ENCODE measurements at regions of chr9 and their contacts with region 1.

Region 1: GRCh38 chr9:94681508-94681907 is 42.2 kb upstream of the FBP1 start:
- DNase-seq: peak; percentile 68
- ATAC-seq: peak; percentile 97
- H3K4me3 Mint-ChIP-seq: no peak overlapping the region
- H3K27ac Mint-ChIP-seq: no peak overlapping the region
- H3K4me1 Mint-ChIP-seq: peaks cover 11% of the 10 kb centered on the region
- H3K27me3 Mint-ChIP-seq: peaks cover 5% of the 10 kb centered on the region; the same call in 1 of the 2 replicates
- CTCF ChIP-seq: 0 out of 2 replicates have a peak, but pooled peaks have one; percentile 36

Region 2: GRCh38 chr9:93843396-93843795 is 838.1 kb before region 1 on chr9:
- CTCF ChIA-PET with region 1: no interaction called
- POLR2A ChIA-PET with region 1: no interaction called
- DNase-seq: no peak
- ATAC-seq: no peak
- H3K4me3 Mint-ChIP-seq: no peak overlapping the region
- H3K27ac Mint-ChIP-seq: no peak overlapping the region
- H3K4me1 Mint-ChIP-seq: no peaks in the 10 kb centered on the region
- H3K27me3 Mint-ChIP-seq: peaks cover 6% of the 10 kb centered on the region
- CTCF ChIP-seq: no peak

Region 3: DNA sequence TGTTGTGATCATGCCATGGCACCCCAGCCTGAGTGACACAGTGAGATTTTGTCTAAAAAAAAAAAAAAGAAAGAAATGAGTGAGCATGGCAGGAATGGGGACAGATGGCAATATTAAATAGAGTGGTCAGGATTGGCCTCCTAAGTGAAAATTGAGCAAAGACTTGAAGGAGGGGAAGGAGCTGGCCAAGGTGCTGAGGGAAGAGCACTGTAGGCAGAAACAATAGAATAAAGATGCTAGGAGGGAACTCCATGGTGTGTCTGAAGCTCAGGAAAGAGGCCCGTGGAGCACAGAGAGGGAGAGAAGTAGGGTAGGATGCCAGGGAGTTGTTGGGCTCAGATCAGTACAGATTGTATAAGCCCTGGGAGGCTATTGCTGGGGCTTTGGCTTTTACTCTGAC is 191.0 kb before region 1 on chr9:
- CTCF ChIA-PET with region 1: no interaction called
- POLR2A ChIA-PET with region 1: no interaction called
- DNase-seq: no peak
- ATAC-seq: no peak
- H3K4me3 Mint-ChIP-seq: no peak overlapping the region
- H3K27ac Mint-ChIP-seq: no peak overlapping the region
- H3K4me1 Mint-ChIP-seq: no peaks in the 10 kb centered on the region
- H3K27me3 Mint-ChIP-seq: no peaks in the 10 kb centered on the region; the same call in 1 of the 2 replicates
- CTCF ChIP-seq: no peak

Region 4: GRCh38 chr9:94563548-94563947 is 118.0 kb before region 1 on chr9:
- CTCF ChIA-PET with region 1: no interaction called
- POLR2A ChIA-PET with region 1: no interaction called
- DNase-seq: no peak
- ATAC-seq: no peak
- H3K4me3 Mint-ChIP-seq: no peak overlapping the region
- H3K27ac Mint-ChIP-seq: no peak overlapping the region
- H3K4me1 Mint-ChIP-seq: no peaks in the 10 kb centered on the region
- H3K27me3 Mint-ChIP-seq: no peaks in the 10 kb centered on the region
- CTCF ChIP-seq: no peak

Region 5: DNA sequence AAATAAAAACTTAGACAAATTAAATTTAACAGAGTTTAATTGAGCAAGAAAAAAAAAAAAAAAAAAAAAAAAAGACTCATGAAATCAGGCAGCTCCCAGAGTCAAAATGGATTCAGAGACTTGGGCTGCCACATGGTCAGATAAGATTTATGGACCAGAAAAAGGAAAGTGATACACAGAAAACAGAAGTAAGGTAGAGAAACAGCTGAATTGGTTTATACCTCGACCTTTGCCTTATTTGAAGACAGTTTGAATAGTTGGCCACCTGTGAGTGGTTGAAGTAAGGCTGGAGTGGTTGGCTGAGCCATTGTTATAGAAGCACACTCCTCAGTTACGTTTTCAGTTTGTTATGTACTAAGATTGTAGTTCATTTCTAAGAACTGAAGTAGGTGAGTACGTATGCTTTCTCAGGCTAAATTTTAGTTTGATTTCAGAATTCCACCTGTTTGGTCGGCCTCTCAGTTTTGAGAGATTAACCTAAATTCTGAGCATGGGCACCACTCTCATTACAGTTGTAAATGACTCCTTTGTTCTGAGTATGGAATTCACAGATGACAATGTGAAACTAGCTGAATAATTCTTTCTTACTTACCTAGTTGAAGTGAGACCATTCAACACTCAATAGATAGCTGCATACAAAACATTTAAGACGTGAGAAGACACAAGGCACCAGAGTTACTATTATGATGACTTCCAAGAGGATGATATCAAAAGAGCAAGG is 194.0 kb after region 1 on chr9:
- CTCF ChIA-PET with region 1: no interaction called
- POLR2A ChIA-PET with region 1: no interaction called
- DNase-seq: no peak
- ATAC-seq: no peak
- H3K4me3 Mint-ChIP-seq: no peak overlapping the region
- H3K27ac Mint-ChIP-seq: no peak overlapping the region
- H3K4me1 Mint-ChIP-seq: peaks cover 15% of the 10 kb centered on the region
- H3K27me3 Mint-ChIP-seq: no peaks in the 10 kb centered on the region
- CTCF ChIP-seq: no peak

Region 6: DNA sequence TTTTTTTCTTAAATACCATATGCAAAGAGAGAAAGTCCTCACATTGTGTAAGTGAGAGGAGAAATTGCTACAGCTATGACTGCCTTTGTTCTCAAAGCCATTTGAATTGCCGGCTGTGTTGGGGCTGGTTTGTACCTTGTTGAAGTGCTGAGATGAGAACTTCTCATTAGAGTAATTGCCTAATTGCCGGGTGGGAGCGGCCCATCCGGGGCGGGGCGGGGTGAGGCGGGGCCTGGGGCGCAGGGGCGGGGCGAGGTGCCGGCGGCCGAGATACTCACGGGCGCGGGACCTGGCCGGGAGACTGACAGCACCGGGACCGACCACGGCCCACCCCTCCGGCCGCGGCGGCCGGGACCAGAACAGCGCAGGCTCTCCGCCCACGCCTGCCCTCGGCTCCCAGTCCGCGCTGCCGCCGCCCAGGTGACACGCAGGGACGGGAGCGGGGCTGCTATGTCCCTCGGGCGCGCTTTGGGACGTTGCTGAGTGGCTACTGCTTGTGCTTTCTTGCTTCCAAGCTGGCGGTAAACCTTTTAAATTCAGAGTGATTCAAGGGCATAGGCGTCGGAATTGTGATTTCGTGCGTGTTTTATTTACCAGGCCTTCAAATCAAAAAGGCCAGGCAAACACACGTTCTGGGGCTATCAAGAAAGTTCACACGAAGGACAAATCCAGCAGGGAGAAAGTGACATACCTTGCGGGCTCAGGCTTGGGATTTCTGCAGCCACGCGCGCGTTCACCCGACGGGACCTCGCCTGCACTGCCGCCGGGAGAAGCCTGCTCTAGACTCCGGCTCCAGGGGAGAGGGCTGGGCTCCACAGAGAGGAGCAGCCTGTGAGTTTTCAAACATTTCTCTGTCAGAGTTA is 366.9 kb after region 1 on chr9:
- CTCF ChIA-PET with region 1: interaction called, 16 read pairs
- POLR2A ChIA-PET with region 1: no interaction called
- DNase-seq: peak; percentile 72
- ATAC-seq: peak; percentile 65
- H3K4me3 Mint-ChIP-seq: peak overlapping the region; percentile 81
- H3K27ac Mint-ChIP-seq: no peak overlapping the region
- H3K4me1 Mint-ChIP-seq: peaks cover 59% of the 10 kb centered on the region
- H3K27me3 Mint-ChIP-seq: peaks cover 31% of the 10 kb centered on the region
- CTCF ChIP-seq: no peak

Region 7: DNA sequence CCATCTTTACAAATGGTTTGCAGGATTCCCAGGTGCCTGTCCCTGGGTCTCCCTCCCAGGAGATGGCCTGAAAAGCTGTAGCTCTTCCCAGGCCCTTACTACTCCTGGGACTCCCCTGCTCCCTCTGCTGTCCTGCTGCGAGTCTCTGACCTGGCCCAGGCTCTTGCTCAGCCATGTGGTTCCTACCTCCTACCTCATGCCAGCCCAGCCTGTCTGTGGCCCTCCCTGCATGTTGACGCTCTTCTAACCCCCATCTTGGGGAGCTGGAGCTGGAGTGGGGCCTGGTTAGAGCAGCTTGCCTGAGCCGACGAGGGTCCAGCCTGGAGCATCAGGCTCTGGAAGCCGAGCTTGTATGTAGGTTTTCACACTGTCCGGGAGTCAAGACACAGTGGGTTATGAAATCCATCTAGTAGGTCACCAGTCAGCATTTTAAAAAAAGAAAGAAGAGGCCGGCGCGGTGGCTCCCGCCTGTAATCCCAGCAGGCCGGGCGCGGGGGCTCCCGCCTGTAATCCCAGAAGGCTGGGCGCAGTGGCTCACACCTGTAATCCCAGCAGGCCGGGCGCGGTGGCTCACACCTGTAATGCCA is 391.6 kb after region 1 on chr9:
- CTCF ChIA-PET with region 1: interaction called, 10 read pairs
- POLR2A ChIA-PET with region 1: no interaction called
- DNase-seq: peak; percentile 47
- ATAC-seq: peak; percentile 91
- H3K4me3 Mint-ChIP-seq: no peak overlapping the region
- H3K27ac Mint-ChIP-seq: no peak overlapping the region
- H3K4me1 Mint-ChIP-seq: peaks cover 30% of the 10 kb centered on the region
- H3K27me3 Mint-ChIP-seq: no peaks in the 10 kb centered on the region
- CTCF ChIP-seq: no peak